HEK293T (cell line): ENCODE measurements at regions of chr15 and their contacts with region 1.

Region 1: DNA sequence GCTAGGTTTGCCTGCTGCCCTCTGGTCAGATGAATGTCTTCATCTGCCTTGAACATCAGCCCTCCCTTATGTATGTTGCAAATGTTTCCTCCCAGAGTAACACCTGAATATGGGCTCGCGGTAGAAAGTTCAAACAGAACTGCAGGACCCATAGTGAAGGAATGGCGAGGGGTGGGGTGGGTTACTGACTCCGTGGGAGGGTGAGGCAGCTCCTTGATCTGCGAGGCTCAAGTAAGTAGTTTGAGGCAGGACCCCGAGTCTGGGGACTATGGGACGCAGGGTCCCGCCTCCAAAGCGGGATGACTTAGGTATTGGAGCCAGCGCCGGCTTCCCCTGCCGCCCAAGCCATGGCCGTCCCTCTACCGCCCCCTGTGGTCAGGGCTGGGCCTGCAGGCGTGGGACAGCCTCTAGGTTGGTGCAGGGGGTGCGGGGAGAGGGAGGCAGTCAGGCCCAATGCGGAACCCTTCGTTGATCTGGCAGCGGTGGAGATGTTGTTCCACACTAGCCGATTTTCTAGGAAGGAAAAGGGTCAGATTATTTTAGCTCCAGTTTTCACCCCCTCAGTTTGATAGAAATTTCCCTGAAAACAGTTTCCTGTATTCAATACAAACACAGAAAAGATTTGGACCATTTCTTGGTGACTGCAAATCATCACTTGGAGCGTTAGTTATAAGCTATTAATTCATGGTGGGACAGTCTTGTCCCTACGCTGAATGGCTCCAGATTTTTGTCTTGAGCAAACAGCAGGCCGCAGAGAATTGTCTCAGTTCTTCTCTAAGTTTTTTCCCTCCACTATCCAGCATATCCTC is 72.3 kb downstream of the CORO2B start:
- DNase-seq: peak; percentile 92

Region 2: GRCh38 chr15:68574046-68574445 is 77.1 kb before region 1 on chr15:
- CTCF ChIA-PET with region 1: interaction called, 10 read pairs
- POLR2A ChIA-PET with region 1: no interaction called
- DNase-seq: no peak

Region 3: GRCh38 chr15:68636256-68636655 is 14.8 kb before region 1 on chr15:
- CTCF ChIA-PET with region 1: interaction called, 12 read pairs
- POLR2A ChIA-PET with region 1: no interaction called
- DNase-seq: no peak